ENCODE measurements at regions of chr1 and their contacts with region 1.

Region 1: DNA sequence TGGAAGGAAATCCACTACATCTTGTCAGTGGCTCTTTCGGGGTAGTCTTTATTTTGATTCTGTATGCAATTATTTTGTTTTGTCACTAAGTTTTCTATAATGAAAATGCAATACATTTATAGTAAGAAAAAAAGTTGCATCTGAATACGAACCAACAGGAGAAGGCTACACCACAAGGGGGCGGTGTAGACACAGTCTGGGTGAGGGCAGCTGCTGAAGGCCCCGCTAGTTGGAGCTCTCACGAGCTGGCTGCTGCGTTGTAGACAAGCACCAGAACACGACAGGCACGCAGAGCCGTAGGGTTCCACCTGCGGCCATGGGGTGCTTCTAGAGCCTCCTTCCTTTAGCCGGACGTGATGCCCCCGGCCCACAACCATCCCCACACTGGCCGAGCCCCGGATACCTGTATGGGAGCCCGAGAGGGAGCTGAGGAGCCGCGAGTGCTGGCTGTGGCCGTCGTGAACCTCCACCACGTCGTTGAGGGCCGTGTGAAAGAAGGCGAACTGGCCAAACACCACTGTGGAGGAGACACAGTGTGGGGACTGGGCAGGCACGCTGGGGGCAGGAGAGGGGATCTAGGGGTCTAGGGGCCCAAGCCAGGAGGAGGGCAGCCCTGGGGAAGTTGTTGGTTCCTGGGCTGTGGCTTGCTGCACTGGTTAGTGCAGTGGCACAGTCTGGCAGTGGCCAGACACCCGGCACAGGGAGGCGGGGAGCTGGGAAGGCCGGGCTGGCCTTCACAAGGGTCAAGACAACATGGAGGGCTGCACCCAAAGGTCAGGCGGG is 160.8 kb downstream of the ZSCAN20 start:
- DNase-seq: peak; percentile 56 to 83
- ATAC-seq: peak; percentile 88 to 94
- H3K4me3 ChIP-seq: no peak overlapping the region
- H3K27ac ChIP-seq: no peak overlapping the region
- H3K4me1 ChIP-seq: no peaks in the 10 kb centered on the region
- CTCF ChIP-seq: peak; percentile 91
- EP300 ChIP-seq: no peak
- POLR2A ChIP-seq: no peak
- RAD21 ChIP-seq: peak; percentile 66 to 76

Region 2: GRCh38 chr1:34162852-34163766 is 529.9 kb after region 1 on chr1:
- CTCF ChIA-PET with region 1: interaction called, 12 read pairs
- POLR2A ChIA-PET with region 1: no interaction called
- DNase-seq: peak; percentile 51 to 74
- ATAC-seq: peak; percentile 93 to 98
- H3K4me3 ChIP-seq: peak overlapping the region; percentile 41
- H3K27ac ChIP-seq: no peak overlapping the region
- H3K4me1 ChIP-seq: peaks cover 13% of the 10 kb centered on the region; the same call in 2 of the 3 replicates
- CTCF ChIP-seq: peak; percentile 46; the same call in 2 of the 3 replicates
- EP300 ChIP-seq: no peak
- POLR2A ChIP-seq: no peak
- RAD21 ChIP-seq: peak; percentile 57 to 72

Region 3: GRCh38 chr1:34597877-34598514 is 964.8 kb after region 1 on chr1:
- CTCF ChIA-PET with region 1: interaction called, 22 read pairs
- POLR2A ChIA-PET with region 1: no interaction called
- DNase-seq: peak; percentile 46 to 48
- ATAC-seq: peak; percentile 85 to 95
- H3K4me3 ChIP-seq: no peak overlapping the region
- H3K27ac ChIP-seq: no peak overlapping the region
- H3K4me1 ChIP-seq: no peaks in the 10 kb centered on the region
- CTCF ChIP-seq: peak; percentile 49
- EP300 ChIP-seq: no peak
- POLR2A ChIP-seq: no peak
- RAD21 ChIP-seq: peak; percentile 61 to 83